Common myeloid progenitor, CD34-positive (primary cell): ENCODE measurements at regions of chr3 and their contacts with region 1.

Region 1: GRCh38 chr3:138923531-138923994 is 23.4 kb downstream of the FOXL2 start:
- DNase-seq: peak; percentile 89 to 95 (median 89)
- H3K4me3 ChIP-seq: no peak overlapping the region
- H3K27ac ChIP-seq: no peak overlapping the region
- H3K4me1 ChIP-seq: peaks cover 0 to 2% (median 0%) of the 10 kb centered on the region in 4 experiments
- H3K27me3 ChIP-seq: peaks cover 0 to 2% (median 0%) of the 10 kb centered on the region in 5 experiments

Region 2: DNA sequence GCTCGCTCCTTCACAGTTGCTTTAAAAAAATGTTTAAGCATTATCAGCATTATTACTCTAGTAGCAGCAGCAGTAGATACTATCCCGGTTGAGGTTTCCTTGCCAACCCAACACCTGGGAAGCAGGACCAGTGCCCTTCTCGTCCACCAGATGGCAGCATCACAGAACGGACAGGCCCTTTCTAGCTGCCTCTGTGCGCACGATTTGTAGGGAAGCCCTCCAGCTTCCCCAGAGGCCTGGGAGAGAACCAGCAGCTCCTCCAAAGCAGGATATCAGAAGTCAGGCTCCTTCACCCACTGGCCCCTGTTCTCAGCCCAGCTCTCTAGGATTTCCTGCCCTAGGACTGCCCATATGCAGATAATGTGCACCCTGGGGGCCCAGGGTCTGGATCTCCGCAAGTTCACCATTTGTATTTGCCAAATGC is 506.0 kb before region 1 on chr3:
- CTCF ChIA-PET with region 1: interaction called, 46 read pairs
- POLR2A ChIA-PET with region 1: no interaction called
- DNase-seq: peak; percentile 78 to 83 (median 79)
- H3K4me3 ChIP-seq: no peak overlapping the region
- H3K27ac ChIP-seq: no peak overlapping the region
- H3K4me1 ChIP-seq: peaks cover 0 to 3% (median 0%) of the 10 kb centered on the region in 4 experiments
- H3K27me3 ChIP-seq: peaks cover 0 to 5% (median 0%) of the 10 kb centered on the region in 5 experiments

Region 3: DNA sequence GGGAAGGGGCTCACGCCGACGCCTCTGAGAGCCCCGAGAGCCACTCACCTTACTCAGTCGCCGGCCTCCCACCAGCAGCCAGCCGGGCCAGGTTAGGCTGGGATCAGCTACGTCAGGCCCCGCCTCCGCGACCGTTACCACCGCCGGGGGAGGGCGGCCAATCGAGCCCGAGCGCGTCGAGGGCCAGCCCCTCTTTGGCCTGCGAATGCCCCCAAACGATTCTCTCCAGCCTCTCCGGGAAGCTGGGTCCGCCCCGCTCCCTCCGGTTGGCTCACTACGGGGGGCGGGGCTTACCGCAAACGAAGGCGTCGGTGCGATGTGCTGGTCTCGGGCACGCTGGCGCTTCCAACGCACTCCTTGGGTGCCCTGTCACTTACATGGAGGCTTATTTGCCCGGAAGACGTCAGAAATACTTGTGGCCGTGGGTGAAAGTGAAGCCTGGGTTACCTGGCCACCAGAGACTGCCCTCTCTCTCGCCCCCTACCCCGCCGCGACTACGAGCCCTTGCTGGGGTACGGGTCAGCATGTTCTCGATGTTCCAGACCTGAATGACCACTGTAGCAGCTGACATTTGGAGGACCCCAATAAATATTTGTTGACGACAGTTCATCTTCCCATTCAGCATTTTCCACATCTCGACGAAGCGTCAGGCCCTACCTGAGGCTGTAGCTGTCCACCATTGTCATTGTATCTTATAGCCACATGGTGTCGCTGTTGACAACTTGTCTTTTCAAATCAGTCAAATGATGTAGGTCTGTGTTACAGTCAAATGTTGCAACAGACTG is 329.2 kb before region 1 on chr3 and contains the start of gene CEP70:
- CTCF ChIA-PET with region 1: interaction called, 92 read pairs
- POLR2A ChIA-PET with region 1: no interaction called
- DNase-seq: peak; percentile 95 to 99 (median 98)
- H3K4me3 ChIP-seq: peak within 1 kb of the TSS; percentile 63 to 97 (median 90)
- H3K27ac ChIP-seq: peak within 1 kb of the TSS; percentile 87 to 94
- H3K4me1 ChIP-seq: peaks cover 3 to 37% (median 21%) of the 10 kb centered on the region in 4 experiments
- H3K27me3 ChIP-seq: no peaks in the 10 kb centered on the region

Region 4: GRCh38 chr3:138694287-138695007 is 229.1 kb before region 1 on chr3:
- CTCF ChIA-PET with region 1: interaction called, 159 read pairs
- POLR2A ChIA-PET with region 1: interaction called, 3 read pairs
- DNase-seq: peak in 2 of 3 donors; percentile 53
- H3K4me3 ChIP-seq: no peak overlapping the region
- H3K27ac ChIP-seq: no peak overlapping the region
- H3K4me1 ChIP-seq: peaks cover 0 to 7% (median 1%) of the 10 kb centered on the region in 4 experiments
- H3K27me3 ChIP-seq: no peaks in the 10 kb centered on the region

Region 5: DNA sequence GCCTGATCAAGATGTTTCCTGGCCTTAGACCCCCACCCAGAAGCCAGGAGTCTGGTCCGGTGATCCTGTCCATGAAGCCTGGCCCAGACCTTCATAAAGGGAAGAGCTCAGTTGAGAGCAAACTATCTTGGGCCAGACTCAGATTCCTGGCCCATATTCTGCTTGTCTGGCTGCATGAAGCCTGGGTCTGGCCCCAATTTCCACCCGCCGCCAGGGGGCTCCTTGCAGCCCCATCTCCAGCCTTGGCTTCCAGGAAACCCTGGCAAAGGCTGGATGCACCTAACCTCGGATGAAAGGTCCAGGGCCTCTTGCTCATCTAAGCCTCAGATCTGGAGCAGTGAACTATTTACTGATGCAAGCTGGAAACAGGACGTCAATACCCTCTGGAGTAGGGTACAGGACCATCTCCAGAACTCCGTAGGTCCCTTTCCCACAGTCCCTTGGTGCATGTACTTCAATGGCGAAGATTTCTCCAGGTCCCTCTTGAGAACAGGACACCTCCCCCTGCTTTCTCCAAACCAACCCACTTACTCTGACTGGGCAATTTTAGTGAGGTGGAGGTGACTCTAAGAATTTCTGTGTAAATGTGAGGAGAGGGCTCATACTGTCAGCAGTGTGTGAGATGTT is 17.8 kb after region 1 on chr3:
- CTCF ChIA-PET with region 1: interaction called, 35 read pairs
- POLR2A ChIA-PET with region 1: no interaction called
- DNase-seq: peak; percentile 63 to 76 (median 72)
- H3K4me3 ChIP-seq: no peak overlapping the region
- H3K27ac ChIP-seq: no peak overlapping the region
- H3K4me1 ChIP-seq: peaks cover 2 to 57% (median 48%) of the 10 kb centered on the region in 4 experiments
- H3K27me3 ChIP-seq: peaks cover 7 to 99% (median 81%) of the 10 kb centered on the region in 5 experiments